Endothelial cell of umbilical vein (primary cell): ENCODE measurements at regions of chr6 and their contacts with region 1.

Region 1: DNA sequence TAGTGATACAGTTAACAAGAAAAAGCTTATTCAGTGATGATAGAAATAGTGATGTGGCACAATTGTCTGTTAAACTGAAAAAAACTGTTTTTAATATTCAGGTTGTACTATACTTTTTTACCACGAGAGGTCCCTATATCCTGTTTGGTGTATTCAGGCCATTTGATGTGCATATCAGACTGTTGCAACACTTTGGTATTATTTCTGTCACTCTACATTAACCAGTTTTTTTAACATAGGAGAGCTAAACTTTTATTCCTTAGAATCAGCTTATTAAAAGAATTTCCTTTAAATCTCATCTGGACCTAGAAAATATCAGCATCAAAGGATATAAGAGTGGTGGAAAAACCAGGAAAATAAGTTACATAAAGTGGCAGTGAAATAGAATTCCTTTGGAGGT is 36.8 kb downstream of the TSPYL4 start:
- DNase-seq: peak; percentile 61
- H3K4me3 ChIP-seq: no peak overlapping the region
- H3K27ac ChIP-seq: no peak overlapping the region
- H3K4me1 ChIP-seq: peaks cover 9% of the 10 kb centered on the region
- H3K27me3 ChIP-seq: no peaks in the 10 kb centered on the region
- CTCF ChIP-seq: peak; percentile 15 to 36
- POLR2A ChIP-seq: no peak

Region 2: DNA sequence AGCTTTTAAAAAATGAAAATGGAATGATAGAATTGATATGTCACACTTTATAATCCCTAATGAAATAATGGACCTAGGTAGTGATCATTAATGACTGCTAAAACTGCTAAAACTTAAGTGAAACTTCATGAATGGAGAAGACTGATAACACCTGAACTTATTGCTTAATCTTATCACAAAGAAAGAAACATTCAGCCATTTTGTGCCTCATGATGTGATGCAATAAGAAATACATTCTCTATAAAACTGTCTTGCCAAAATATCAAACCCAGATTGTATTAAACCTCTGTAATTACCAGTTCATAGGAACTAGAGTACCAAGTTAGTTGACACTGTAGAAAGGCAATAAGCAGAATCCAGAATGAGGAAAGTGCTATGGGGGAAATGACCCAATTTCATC is 36.7 kb before region 1 on chr6:
- CTCF ChIA-PET with region 1: no interaction called
- POLR2A ChIA-PET with region 1: no interaction called
- dilution Hi-C with region 1: no loop called
- intact Hi-C with region 1: no loop called
- DNase-seq: no peak
- H3K4me3 ChIP-seq: no peak overlapping the region
- H3K27ac ChIP-seq: no peak overlapping the region
- H3K4me1 ChIP-seq: no peaks in the 10 kb centered on the region
- H3K27me3 ChIP-seq: no peaks in the 10 kb centered on the region
- CTCF ChIP-seq: no peak
- POLR2A ChIP-seq: no peak

Region 3: GRCh38 chr6:116206231-116206903 is 10.7 kb before region 1 on chr6:
- CTCF ChIA-PET with region 1: interaction called, 11 read pairs
- POLR2A ChIA-PET with region 1: no interaction called
- dilution Hi-C with region 1: no loop called
- intact Hi-C with region 1: no loop called
- DNase-seq: no peak
- H3K4me3 ChIP-seq: no peak overlapping the region
- H3K27ac ChIP-seq: no peak overlapping the region
- H3K4me1 ChIP-seq: no peaks in the 10 kb centered on the region
- H3K27me3 ChIP-seq: no peaks in the 10 kb centered on the region
- CTCF ChIP-seq: no peak
- POLR2A ChIP-seq: no peak

Region 4: DNA sequence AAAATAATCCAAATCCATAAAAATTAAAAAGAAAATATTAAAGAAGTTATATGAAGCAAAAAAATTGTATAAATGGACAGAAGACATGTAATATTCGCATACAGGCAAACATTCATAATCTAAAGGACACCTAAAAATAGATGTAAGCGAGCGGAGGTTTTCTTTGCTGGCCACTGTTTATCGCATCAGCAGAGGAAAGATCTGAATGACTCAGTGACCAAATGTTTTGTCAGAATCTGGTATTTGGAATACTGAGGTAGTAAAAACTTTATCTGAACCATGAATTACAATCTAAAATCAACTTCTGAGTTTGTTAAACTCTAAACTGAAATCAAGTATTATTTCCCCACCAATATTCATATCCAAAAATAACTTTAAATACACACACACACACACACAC is 29.0 kb after region 1 on chr6:
- CTCF ChIA-PET with region 1: interaction called, 90 read pairs
- POLR2A ChIA-PET with region 1: no interaction called
- dilution Hi-C with region 1: no loop called
- intact Hi-C with region 1: loop called (anchors 1 kb)
- DNase-seq: peak; percentile 75
- H3K4me3 ChIP-seq: peak overlapping the region in 1 of 3 experiments; percentile 12
- H3K27ac ChIP-seq: peak overlapping the region; percentile 42
- H3K4me1 ChIP-seq: peaks cover 29% of the 10 kb centered on the region
- H3K27me3 ChIP-seq: no peaks in the 10 kb centered on the region
- CTCF ChIP-seq: no peak
- POLR2A ChIP-seq: no peak

Region 5: DNA sequence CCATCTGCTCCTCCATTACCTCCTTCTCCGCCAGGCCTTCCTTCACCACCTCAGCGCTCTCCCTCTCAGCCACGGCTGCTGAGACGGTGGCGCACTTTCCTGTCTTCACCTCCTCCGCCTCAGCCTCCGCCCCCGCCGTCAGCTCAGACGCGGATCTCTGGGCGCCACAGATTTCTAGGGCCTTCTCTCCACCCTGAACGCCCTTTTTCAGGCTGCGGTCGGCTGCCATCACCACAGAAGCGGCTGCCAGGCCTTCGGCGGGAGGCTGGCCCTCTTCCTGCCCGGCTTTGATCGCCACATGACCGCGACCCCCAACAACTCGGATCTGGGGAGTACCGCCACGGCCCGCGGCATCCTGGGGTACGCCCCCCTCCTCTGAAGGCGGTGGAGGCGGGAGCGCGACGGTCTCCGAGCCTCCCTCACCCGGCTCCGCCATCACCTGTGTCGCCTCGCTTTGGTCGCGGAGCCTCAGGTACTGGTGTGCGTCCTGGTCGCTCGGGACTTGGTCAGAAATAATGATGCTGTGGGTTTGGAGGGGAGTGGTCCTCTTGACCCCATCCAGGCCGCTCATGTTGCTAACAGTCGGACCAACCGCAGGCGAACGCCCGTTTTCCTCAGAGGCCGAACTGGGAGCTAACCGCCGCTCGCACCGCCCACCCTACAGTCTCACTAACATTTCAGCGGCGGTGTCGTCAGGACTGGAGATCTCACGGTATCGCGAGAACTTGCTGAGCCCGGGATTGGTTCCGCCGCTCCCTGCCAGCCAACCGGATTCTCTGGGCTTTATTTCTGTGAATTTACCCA is 62.4 kb after region 1 on chr6 and contains the start of gene TSPYL1:
- CTCF ChIA-PET with region 1: interaction called, 52 read pairs
- POLR2A ChIA-PET with region 1: no interaction called
- dilution Hi-C with region 1: no loop called
- intact Hi-C with region 1: loop called (anchors 2 kb)
- DNase-seq: peak; percentile 98
- H3K4me3 ChIP-seq: peak within 1 kb of the TSS; percentile 44 to 79 (median 53)
- H3K27ac ChIP-seq: peak within 1 kb of the TSS; percentile 84
- H3K4me1 ChIP-seq: peaks cover 37% of the 10 kb centered on the region
- H3K27me3 ChIP-seq: no peaks in the 10 kb centered on the region
- CTCF ChIP-seq: no peak
- POLR2A ChIP-seq: peak; percentile 90
- total RNA-seq, gene TSPYL1: 54.5 and 57.3 TPM in 2 replicates

Region 6: DNA sequence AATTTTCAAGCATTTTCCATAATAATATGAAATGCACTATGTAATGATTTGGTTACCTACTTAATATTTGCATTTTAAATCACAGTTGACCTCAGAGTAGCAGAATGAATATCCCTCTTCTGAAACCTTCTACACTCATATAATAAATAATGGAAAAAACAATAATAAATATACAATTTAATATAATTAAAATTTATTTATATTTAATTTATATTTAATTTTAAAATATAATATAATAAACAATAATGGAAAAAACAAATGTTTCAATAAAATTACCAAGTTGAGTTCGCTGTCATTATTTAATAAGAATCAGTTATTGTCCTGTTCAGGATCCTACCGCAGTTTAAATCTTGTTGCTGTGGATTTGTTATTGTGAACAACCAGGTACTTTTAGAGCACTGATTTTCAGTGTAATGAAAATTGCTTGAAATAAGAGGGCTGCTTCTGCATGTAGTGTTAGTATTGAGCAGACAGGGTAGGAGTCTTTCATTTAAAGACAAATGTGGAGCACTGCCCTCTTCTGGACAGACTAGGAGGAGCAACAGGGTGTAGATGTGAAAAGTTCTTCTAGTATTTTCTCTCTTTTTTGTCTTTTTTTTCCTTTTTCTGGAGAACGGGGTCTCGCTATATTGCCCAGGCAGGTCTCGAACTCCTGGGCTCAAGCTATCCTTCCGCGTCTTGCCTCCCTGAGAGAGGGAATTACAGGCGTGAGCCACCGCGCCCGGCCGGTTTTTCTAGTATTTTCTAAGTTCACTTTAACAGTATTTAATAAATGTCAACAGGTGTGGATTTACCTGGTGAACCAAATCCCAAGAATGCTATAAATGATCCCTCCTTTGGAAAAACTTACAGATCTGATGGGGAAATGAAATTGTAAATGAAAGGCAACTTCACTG is 314.9 kb after region 1 on chr6:
- CTCF ChIA-PET with region 1: interaction called, 26 read pairs
- POLR2A ChIA-PET with region 1: no interaction called
- dilution Hi-C with region 1: no loop called
- intact Hi-C with region 1: loop called (anchors 1 kb)
- DNase-seq: peak; percentile 86
- H3K4me3 ChIP-seq: no peak overlapping the region
- H3K27ac ChIP-seq: no peak overlapping the region
- H3K4me1 ChIP-seq: peaks cover 16% of the 10 kb centered on the region
- H3K27me3 ChIP-seq: peaks cover 0 to 2% of the 10 kb centered on the region in 2 experiments
- CTCF ChIP-seq: peak; percentile 59 to 74
- POLR2A ChIP-seq: no peak

Region 7: DNA sequence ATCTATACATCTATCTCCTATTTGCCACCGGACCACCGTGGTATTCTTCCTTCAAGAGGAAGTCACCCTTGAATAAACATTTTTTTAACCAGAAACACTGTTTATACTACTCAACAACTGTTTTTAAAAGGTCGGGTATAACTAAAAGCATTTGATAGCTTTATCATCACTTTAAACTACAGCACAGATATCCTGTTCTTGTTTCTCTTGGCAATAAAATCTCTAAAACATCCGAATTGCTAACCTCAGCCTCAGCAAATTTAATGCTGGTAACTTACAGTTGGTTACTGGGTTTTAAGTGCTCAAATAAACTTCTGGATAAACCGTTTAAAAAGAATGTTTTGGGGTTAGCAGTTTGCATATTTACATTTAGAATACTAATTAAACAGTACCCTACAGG is 431.1 kb after region 1 on chr6:
- CTCF ChIA-PET with region 1: interaction called, 14 read pairs
- POLR2A ChIA-PET with region 1: no interaction called
- dilution Hi-C with region 1: no loop called
- intact Hi-C with region 1: loop called (anchors 5 kb)
- DNase-seq: peak; percentile 93
- H3K4me3 ChIP-seq: peak overlapping the region in 1 of 3 experiments; percentile 42
- H3K27ac ChIP-seq: peak overlapping the region; percentile 36
- H3K4me1 ChIP-seq: peaks cover 24% of the 10 kb centered on the region
- H3K27me3 ChIP-seq: no peaks in the 10 kb centered on the region
- CTCF ChIP-seq: no peak
- POLR2A ChIP-seq: peak; percentile 66